Psoas muscle (tissue), 8 donors: ENCODE measurements at regions of chrX and their contacts with region 1.

Region 1: GRCh38 chrX:53095796-53096195 is 1.9 kb downstream of the KANTR start:
- DNase-seq: no peak
- ATAC-seq: no peak
- H3K4me3 ChIP-seq: peak overlapping the region; percentile 75
- H3K27ac ChIP-seq: no peak overlapping the region
- H3K4me1 ChIP-seq: peaks cover 8% of the 10 kb centered on the region
- H3K27me3 ChIP-seq: peaks cover 0 to 28% (median 0%) of the 10 kb centered on the region in 3 donors
- CTCF ChIP-seq: no peak

Region 2: DNA sequence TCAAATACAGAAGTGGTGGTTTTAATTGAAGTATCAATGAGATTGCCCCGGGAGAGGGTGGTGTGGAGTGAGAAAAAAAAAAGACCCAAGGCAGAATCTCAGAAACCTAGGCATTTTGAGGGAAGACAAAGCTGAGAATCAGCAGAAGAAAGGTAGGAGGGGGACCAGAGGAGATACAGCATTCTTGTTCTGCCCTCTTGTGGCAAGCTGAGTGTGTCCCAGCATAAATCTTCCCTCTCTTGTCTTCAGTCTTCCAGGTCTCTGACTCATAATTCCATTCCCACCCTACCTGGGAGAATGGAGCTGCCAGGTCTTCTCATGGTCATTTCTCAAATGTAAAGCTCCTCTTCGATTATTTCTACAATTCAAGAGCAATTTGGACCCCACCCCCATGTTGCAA is 1235.1 kb before region 1 on chrX:
- intact Hi-C with region 1: no loop called
- DNase-seq: no peak
- ATAC-seq: peak in 1 of 4 donors; percentile 58
- H3K4me3 ChIP-seq: no peak overlapping the region
- H3K27ac ChIP-seq: no peak overlapping the region
- H3K4me1 ChIP-seq: no peaks in the 10 kb centered on the region
- H3K27me3 ChIP-seq: no peaks in the 10 kb centered on the region
- CTCF ChIP-seq: peak; percentile 36

Region 3: GRCh38 chrX:53018627-53019026 is 77.2 kb before region 1 on chrX:
- intact Hi-C with region 1: no loop called
- DNase-seq: no peak
- ATAC-seq: no peak
- H3K4me3 ChIP-seq: no peak overlapping the region
- H3K27ac ChIP-seq: no peak overlapping the region
- H3K4me1 ChIP-seq: no peaks in the 10 kb centered on the region
- H3K27me3 ChIP-seq: peaks cover 0 to 72% (median 0%) of the 10 kb centered on the region in 3 donors
- CTCF ChIP-seq: no peak

Region 4: GRCh38 chrX:53211391-53211978 is 115.7 kb after region 1 on chrX:
- intact Hi-C with region 1: loop called in 1 of 2 experiments (anchors 10 kb)
- DNase-seq: no peak
- ATAC-seq: peak; percentile 51 to 71 (median 62)
- H3K4me3 ChIP-seq: no peak overlapping the region
- H3K27ac ChIP-seq: no peak overlapping the region
- H3K4me1 ChIP-seq: no peaks in the 10 kb centered on the region
- H3K27me3 ChIP-seq: no peaks in the 10 kb centered on the region
- CTCF ChIP-seq: no peak